ENCODE measurements at regions of chr6 and their contacts with region 1.

Region 1: DNA sequence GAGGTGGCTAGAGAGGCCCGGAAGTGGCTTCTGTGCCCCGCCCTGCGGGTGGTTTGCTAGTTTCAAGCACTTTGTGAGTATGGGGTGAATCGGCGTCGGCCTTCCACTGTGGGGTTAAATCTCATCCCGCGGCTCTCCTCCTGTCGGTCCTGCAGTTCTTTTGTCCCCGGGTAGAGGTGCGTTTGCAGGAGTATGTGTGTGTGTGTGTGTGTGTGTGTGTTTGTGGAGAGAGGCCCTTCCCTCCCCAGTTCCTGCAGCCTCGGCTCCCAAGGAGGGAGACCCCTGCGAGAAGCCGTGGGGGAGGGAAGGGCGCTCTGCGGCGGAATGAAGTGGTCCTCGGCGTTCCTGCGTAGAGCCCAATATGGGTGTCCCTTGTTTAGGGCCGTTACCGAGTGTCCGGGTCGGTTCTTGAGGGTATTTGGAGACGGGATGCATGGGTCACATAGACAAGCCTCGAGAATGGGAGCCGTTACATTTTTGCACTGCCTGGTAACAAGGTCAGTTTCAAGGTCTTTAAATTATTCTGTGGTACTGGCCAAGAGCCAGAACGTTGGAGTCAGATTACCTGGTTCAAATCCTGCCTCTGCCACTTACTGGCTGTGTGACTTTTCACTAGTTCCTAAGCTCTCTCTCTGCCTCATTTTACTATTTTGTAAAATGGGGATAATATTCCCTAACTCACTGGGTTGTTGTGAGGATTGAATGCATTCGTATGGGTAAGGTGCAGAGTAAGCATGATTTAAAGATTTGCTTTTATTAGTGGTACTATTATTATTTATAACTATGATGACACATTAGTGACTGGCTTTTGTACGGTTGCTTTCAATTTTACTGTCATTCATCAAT is at the start of gene ZKSCAN3:
- DNase-seq: no peak
- ATAC-seq: peak; percentile 92
- H3K4me3 ChIP-seq: peak within 1 kb of the TSS; percentile 73 to 75
- H3K27ac ChIP-seq: peak within 1 kb of the TSS; percentile 93
- H3K4me1 ChIP-seq: peaks cover 27% of the 10 kb centered on the region
- H3K27me3 ChIP-seq: no peaks in the 10 kb centered on the region
- CTCF ChIP-seq: no peak
- total RNA-seq, gene ZKSCAN3: 7.0 TPM

Region 2: GRCh38 chr6:27931209-27931608 is 418.9 kb before region 1 on chr6:
- CTCF ChIA-PET with region 1: no interaction called
- POLR2A ChIA-PET with region 1: no interaction called
- in situ Hi-C with region 1: no loop called
- intact Hi-C with region 1: no loop called
- DNase-seq: no peak
- ATAC-seq: no peak
- H3K4me3 ChIP-seq: no peak overlapping the region
- H3K27ac ChIP-seq: no peak overlapping the region
- H3K4me1 ChIP-seq: no peaks in the 10 kb centered on the region
- H3K27me3 ChIP-seq: no peaks in the 10 kb centered on the region
- CTCF ChIP-seq: no peak

Region 3: DNA sequence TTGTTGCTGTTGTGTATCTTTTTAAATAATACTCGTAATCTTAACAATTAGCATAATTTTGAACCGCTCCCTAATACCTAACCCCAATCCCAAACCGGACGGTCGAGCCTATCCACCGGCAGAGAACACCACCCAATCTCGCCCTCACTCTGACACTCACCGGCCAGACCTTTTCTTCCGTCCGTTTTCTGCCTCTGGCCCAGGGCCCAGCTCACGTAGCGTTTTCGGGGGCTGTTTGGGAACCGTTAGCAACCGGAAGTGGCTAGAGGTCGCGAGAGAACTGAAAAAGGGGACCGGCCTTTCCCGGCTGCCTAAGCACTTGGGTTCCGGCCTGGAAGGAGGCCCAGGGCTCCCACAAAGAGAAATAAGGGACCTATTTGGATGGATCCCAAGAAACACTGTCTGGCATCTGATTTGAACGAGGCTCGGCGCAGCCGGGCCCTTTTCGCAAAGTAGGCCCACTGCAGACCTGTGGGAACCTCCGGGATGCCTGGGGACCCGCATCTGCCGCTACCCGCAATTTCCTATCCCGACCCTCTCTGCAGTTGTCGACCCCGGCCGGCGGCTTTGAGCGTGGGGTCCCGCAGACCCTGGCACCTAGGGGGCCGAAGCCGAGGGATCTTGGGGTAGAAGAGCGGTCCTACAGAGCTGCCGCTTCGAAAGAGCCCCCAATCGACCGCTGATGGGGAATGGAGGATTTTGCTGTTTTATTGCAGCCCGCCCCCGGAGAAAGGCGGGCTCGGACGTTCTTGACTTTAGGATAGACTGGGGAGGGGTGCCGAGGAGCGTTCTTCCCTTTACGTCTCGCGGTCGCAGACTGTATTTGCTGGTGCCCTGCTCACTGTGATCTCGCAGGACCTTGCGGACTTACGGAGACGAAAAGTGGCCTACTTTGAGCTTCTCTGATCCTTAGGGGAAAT is 213.3 kb before region 1 on chr6:
- CTCF ChIA-PET with region 1: interaction called, 4 read pairs
- POLR2A ChIA-PET with region 1: interaction called, 3 read pairs
- in situ Hi-C with region 1: no loop called
- intact Hi-C with region 1: loop called (anchors 5 kb)
- DNase-seq: peak; percentile 65
- ATAC-seq: peak; percentile 86
- H3K4me3 ChIP-seq: peak overlapping the region; percentile 79 to 81
- H3K27ac ChIP-seq: peak overlapping the region; percentile 100
- H3K4me1 ChIP-seq: peaks cover 36% of the 10 kb centered on the region
- H3K27me3 ChIP-seq: no peaks in the 10 kb centered on the region
- CTCF ChIP-seq: no peak

Region 4: GRCh38 chr6:28266962-28267694 is 83.0 kb before region 1 on chr6 and contains the start of gene ZSCAN26:
- CTCF ChIA-PET with region 1: no interaction called
- POLR2A ChIA-PET with region 1: no interaction called
- in situ Hi-C with region 1: no loop called
- intact Hi-C with region 1: loop called (anchors 5 kb)
- DNase-seq: peak; percentile 78
- ATAC-seq: peak; percentile 98
- H3K4me3 ChIP-seq: peak within 1 kb of the TSS; percentile 73 to 83
- H3K27ac ChIP-seq: peak within 1 kb of the TSS; percentile 95
- H3K4me1 ChIP-seq: peaks cover 16% of the 10 kb centered on the region; the same call in 1 of the 2 replicates
- H3K27me3 ChIP-seq: no peaks in the 10 kb centered on the region
- CTCF ChIP-seq: no peak
- total RNA-seq, gene ZSCAN26: 6.6 TPM

Region 5: GRCh38 chr6:28443112-28443773 is 93.1 kb after region 1 on chr6 and contains the start of gene ZSCAN23:
- CTCF ChIA-PET with region 1: no interaction called
- POLR2A ChIA-PET with region 1: no interaction called
- in situ Hi-C with region 1: no loop called
- intact Hi-C with region 1: no loop called
- DNase-seq: peak; percentile 20
- ATAC-seq: peak; percentile 98
- H3K4me3 ChIP-seq: peak within 1 kb of the TSS; percentile 71 to 88
- H3K27ac ChIP-seq: peak within 1 kb of the TSS; percentile 74
- H3K4me1 ChIP-seq: no peaks in the 10 kb centered on the region
- H3K27me3 ChIP-seq: no peaks in the 10 kb centered on the region; the same call in 1 of the 2 replicates
- CTCF ChIP-seq: no peak
- total RNA-seq, gene ZSCAN23: 1.6 TPM

Region 6: GRCh38 chr6:28895134-28895812 is 545.2 kb after region 1 on chr6:
- CTCF ChIA-PET with region 1: no interaction called
- POLR2A ChIA-PET with region 1: no interaction called
- in situ Hi-C with region 1: no loop called
- intact Hi-C with region 1: no loop called
- DNase-seq: peak; percentile 95
- ATAC-seq: peak; percentile 85
- H3K4me3 ChIP-seq: peak overlapping the region; percentile 89 to 92
- H3K27ac ChIP-seq: peak overlapping the region; percentile 95
- H3K4me1 ChIP-seq: peaks cover 5% of the 10 kb centered on the region
- H3K27me3 ChIP-seq: no peaks in the 10 kb centered on the region
- CTCF ChIP-seq: no peak